ENCODE measurements at regions of chr9 and their contacts with region 1.

Region 1: DNA sequence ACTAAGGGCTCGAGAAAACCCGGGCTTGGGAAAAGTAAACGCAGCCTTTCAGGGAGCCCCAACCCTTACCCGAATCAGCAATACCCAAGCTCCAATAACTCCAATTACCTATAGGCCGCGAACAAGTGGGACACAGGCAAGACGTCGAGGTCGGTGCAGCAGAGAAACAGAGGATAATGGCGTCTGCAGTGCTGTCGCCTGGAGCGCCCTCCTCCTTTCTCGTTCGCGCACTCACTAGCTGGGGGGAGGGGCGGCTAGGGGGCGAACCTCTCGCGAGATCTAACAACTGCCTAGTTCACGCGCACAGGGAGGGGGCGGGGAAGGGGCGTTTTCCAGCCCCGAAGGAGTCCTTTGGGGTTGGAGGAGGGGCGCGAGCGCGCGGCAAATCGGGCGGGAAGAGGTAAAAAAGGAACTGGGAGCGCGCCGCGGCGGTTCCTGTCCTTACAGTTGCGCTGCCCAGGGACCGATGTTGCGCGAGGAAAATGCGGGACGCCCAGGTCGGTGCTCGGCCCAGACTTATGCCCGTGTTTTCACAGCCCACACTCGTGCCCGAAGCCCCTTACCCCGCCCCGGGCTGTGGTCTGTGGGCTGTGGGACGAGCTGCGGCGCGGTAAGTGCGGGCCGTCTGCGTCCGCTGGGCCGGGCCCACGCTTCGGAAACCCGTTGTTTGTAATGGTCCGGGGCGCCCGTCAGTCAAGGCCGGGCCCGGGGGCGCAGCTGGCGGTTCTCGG is at the start of gene RMI1:
- DNase-seq: peak; percentile 100
- H3K4me3 ChIP-seq: peak within 1 kb of the TSS; percentile 59
- H3K27ac ChIP-seq: peak within 1 kb of the TSS; percentile 98
- H3K4me1 ChIP-seq: peaks cover 7% of the 10 kb centered on the region
- H3K27me3 ChIP-seq: no peaks in the 10 kb centered on the region
- CTCF ChIP-seq: no peak
- total RNA-seq, gene RMI1: 9.6 to 16.9 TPM

Region 2: GRCh38 chr9:84139296-84140070 is 158.9 kb after region 1 on chr9:
- intact Hi-C with region 1: loop called (anchors 10 kb)
- DNase-seq: peak; percentile 89
- H3K4me3 ChIP-seq: no peak overlapping the region
- H3K27ac ChIP-seq: peak overlapping the region; percentile 7
- H3K4me1 ChIP-seq: no peaks in the 10 kb centered on the region
- H3K27me3 ChIP-seq: no peaks in the 10 kb centered on the region
- CTCF ChIP-seq: no peak

Region 3: DNA sequence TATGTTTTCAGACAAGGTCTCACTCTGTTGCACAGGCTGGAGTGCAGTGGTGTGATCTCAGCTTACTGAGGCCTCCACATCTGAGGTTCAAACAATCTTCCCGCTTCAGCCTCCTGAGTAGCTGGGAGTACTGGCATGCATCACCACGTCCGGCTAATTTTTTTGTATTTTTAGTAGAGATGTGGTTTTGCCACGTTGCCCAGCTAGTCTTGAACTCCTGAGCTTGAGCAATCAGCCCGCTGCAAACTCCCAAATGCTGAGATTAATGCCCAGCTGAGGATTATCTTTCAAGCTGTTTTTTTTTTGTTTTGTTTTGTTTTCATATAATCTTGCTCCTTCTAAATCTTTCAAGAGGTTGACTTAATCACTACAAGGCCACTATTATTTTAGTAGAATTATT is 407.3 kb after region 1 on chr9:
- intact Hi-C with region 1: no loop called
- DNase-seq: no peak
- H3K4me3 ChIP-seq: no peak overlapping the region
- H3K27ac ChIP-seq: no peak overlapping the region
- H3K4me1 ChIP-seq: no peaks in the 10 kb centered on the region
- H3K27me3 ChIP-seq: no peaks in the 10 kb centered on the region
- CTCF ChIP-seq: no peak

Measured in colonic mucosa (tissue), 4 donors.